PC-9 (cell line): ENCODE measurements at regions of chr1 and their contacts with region 1.

Region 1: GRCh38 chr1:153572569-153573015 is 6.9 kb upstream of the S100A2 start:
- DNase-seq: peak; percentile 81 to 84
- H3K4me3 ChIP-seq: no peak overlapping the region
- H3K27ac ChIP-seq: peak overlapping the region; percentile 75
- H3K4me1 ChIP-seq: peaks cover 29% of the 10 kb centered on the region
- H3K27me3 ChIP-seq: no peaks in the 10 kb centered on the region
- CTCF ChIP-seq: peak; percentile 91

Region 2: DNA sequence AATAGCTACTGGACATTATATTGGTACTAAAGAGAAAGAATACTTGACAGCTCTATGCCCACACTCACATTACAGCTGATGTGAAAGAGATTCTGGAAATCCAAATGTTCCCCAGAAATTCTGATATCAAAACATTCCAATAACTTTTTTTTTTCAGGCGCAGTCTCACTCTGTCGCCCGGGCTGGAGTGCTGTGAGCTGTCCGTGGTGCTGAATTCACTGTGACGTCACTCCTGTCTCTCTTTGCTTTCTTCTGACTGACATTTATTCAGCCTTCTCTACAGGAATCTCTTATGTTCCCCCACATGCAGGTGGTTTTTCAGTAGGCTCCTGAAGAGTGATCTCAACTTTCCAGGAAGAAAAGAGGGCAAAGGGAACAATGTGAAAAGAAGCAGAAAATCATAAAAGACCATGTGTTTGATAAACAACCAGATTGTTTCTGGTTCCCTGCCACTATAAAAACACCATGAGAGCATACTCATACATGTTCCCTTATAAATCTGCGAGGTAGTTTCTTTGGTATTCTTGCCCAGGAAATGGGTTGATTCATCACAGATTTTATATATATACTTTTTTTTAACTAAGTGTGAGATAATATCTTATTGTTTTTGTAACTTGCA is 150.0 kb before region 1 on chr1:
- CTCF ChIA-PET with region 1: no interaction called
- POLR2A ChIA-PET with region 1: no interaction called
- intact Hi-C with region 1: no loop called
- DNase-seq: peak; percentile 47 to 49
- H3K4me3 ChIP-seq: no peak overlapping the region
- H3K27ac ChIP-seq: no peak overlapping the region
- H3K4me1 ChIP-seq: no peaks in the 10 kb centered on the region
- H3K27me3 ChIP-seq: peaks cover 59% of the 10 kb centered on the region
- CTCF ChIP-seq: no peak

Region 3: DNA sequence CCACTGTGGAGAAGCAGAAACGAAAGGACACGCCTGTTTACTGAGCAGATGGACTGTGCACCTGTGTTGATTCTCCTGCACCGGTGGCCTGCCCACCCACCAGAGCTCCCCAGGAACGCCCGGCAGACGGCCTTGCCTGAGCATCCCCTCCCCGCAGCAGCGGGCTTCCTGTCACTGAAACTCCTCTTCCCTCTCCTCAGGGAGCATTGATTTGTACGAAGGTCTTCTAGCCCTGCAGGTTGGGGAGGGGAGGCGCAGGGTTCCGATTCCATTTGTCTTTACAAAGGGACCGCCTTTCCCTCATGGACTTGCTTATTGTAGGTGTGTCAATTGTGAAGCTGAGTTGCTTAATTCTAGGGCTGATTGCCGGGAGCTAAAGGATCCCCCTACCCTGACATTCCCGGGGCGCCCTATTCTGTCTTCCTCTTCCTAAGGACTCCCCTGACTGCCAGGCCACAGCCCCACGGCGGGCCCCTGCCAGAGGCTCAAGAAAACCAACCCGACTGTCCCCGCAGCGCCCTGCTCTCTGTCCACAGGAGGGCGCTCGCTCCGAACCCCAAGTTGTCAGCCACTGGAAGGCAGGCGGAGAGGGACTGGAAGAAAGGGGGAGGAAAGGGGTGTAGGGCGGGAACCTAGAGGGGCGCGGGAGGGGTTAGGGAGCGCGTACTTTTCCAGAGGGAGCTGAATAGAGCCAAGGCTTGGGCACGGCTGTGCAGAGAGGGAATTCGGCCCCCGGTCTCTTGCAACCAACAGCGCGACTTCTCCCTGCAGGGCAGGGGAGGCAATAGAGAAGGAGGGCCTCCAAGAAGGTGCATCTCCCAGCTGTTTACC is 39.6 kb before region 1 on chr1:
- CTCF ChIA-PET with region 1: interaction called, 13 read pairs
- POLR2A ChIA-PET with region 1: interaction called, 8 read pairs
- intact Hi-C with region 1: loop called (anchors 1 kb)
- DNase-seq: peak; percentile 53 to 85
- H3K4me3 ChIP-seq: peak overlapping the region; percentile 85; the same call in 1 of the 2 replicates
- H3K27ac ChIP-seq: peak overlapping the region; percentile 81
- H3K4me1 ChIP-seq: peaks cover 44% of the 10 kb centered on the region
- H3K27me3 ChIP-seq: no peaks in the 10 kb centered on the region
- CTCF ChIP-seq: peak; percentile 90

Region 4: DNA sequence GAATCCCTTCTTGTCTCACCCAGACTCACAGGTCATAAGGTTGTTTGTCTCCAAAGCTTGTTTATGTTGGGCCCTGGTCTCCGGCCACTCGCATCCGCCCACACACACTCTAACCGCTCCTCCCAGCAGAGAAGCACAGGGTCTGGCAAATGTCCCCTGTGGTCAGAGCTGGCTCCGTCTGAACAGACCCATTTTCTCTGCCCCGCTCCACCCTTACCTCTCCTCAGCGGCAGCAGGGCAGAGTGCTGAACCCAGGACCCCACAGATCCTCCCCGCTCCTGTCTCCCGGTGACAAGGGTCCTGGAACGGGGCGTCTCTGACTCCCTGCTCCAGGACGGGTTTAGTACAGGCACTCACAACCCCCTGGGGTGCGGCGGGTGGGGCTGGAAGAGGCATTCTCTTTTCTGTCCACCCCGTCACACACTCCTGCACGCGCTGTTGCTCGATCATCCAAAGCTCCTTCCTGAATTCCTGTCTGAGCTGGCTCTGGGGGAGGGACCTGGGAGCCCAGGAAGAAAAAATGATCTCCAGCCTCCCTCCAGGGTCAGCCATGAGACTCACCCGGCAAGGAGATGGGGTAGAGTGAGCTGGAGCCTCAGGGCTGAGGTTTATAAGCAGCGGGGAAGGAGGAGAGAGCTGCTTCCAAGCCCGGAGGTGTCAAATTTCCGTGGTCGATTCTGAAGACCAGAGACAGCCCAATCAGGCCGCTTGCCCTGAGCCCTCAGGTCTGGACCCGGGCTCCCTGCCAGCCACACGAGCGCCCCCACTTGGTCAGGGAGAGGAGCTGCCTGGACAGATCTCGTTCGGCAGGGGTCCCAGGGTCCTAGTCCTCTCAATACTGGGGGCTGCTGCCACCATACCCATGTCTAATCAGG is 54.6 kb after region 1 on chr1 and contains the start of gene S100A13:
- CTCF ChIA-PET with region 1: interaction called, 13 read pairs
- POLR2A ChIA-PET with region 1: interaction called, 15 read pairs
- intact Hi-C with region 1: loop called (anchors 1 kb)
- DNase-seq: peak; percentile 91 to 95
- H3K4me3 ChIP-seq: peak within 1 kb of the TSS; percentile 69
- H3K27ac ChIP-seq: peak within 1 kb of the TSS; percentile 88
- H3K4me1 ChIP-seq: peaks cover 31% of the 10 kb centered on the region
- H3K27me3 ChIP-seq: no peaks in the 10 kb centered on the region
- CTCF ChIP-seq: peak; percentile 93
- total RNA-seq, gene S100A13: 120 and 144 TPM in 2 replicates

Region 5: DNA sequence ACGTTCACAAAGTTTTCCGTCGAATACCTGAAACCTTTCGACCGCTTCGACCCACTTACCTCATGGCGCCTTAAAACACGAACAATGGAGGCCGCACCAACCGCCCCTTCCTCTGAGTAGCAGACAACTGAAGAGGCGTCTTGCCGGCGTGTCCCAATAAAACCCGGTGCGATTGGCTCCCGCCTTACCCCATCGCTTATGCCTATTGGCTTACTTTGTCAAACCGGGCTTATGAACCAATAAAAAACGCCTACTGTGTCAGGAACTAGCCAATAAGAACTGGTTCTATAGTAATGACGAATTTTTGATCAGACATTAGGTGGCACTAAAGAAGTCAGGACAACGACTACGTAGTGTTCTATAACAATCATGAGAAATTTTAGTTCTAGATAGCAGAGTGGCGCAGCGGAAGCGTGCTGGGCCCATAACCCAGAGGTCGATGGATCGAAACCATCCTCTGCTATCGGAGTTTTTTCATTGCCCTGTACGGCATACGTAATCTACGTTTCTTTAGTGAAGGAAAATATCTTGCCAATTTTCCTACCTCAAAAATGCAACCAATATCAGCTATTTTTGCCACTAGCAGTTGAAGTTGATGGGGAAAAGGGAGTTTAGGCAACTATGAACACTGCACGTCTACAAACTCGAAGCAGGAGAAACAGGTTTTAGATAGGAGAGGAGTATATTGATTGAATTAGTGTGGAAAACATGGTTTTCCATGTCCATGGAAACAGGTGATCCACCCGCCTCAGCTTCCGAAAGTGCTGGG is 98.5 kb after region 1 on chr1 and contains the start of gene ILF2:
- CTCF ChIA-PET with region 1: no interaction called
- POLR2A ChIA-PET with region 1: no interaction called
- intact Hi-C with region 1: loop called (anchors 1 kb)
- DNase-seq: peak; percentile 94 to 100
- H3K4me3 ChIP-seq: peak within 1 kb of the TSS; percentile 75
- H3K27ac ChIP-seq: peak within 1 kb of the TSS; percentile 72
- H3K4me1 ChIP-seq: peaks cover 13% of the 10 kb centered on the region
- H3K27me3 ChIP-seq: no peaks in the 10 kb centered on the region
- CTCF ChIP-seq: 0 out of 2 replicates have a peak, but pooled peaks have one; percentile 14
- total RNA-seq, gene ILF2: 131 and 145 TPM in 2 replicates

Region 6: DNA sequence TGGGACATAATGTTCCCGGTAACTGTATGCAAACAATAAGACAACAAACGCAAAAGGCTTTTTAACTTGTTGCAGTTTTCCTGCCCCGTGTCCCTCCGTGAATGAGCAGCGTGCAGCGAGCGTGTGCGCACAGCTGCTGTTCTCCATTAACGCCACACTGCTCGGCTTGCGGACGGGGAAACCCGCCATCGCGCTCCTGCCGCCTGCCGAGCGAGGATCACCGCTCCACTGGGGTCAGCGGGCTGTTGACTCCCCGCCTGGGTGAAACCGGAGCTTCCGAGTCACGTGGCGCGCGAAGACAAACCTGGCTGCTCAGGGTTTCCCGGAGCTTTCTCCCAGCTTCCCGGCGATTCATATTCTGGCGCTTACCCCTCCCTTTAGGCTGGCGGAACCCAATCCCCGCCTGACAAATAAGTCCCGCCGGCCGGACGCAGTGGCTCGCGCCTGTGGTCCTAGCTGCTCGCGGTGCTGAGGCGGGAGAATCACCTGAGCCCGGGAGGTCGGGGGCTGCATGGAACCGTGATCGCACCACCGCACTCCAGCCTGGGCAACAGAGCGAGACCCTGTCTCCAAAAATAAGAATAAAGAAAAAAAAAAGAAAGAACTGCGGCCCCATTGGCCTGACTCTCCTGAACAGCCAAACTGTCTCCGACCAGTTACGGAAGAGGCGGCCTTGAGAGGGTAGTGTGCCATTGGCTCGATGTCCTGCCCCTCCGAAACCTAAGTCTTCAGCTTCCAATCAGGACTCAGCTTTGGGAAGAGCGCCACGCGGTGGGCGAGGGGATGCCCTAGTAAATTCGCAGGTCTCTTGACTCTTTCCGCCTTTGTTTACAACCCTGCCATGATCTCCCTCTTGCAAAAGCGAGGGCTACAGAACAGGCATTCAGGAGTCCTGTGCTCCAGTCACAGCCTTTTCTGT is 394.7 kb after region 1 on chr1 and contains the start of gene CREB3L4:
- CTCF ChIA-PET with region 1: no interaction called
- POLR2A ChIA-PET with region 1: no interaction called
- intact Hi-C with region 1: loop called (anchors 10 kb)
- DNase-seq: peak; percentile 92 to 93
- H3K4me3 ChIP-seq: peak within 1 kb of the TSS; percentile 90
- H3K27ac ChIP-seq: peak within 1 kb of the TSS; percentile 80
- H3K4me1 ChIP-seq: peaks cover 37% of the 10 kb centered on the region
- H3K27me3 ChIP-seq: no peaks in the 10 kb centered on the region
- CTCF ChIP-seq: peak; percentile 58; the same call in 1 of the 2 replicates
- total RNA-seq, gene CREB3L4: 23.4 and 25.9 TPM in 2 replicates